Transverse colon (tissue), 4 donors: ENCODE measurements at regions of chr15 and their contacts with region 1.

Region 1: DNA sequence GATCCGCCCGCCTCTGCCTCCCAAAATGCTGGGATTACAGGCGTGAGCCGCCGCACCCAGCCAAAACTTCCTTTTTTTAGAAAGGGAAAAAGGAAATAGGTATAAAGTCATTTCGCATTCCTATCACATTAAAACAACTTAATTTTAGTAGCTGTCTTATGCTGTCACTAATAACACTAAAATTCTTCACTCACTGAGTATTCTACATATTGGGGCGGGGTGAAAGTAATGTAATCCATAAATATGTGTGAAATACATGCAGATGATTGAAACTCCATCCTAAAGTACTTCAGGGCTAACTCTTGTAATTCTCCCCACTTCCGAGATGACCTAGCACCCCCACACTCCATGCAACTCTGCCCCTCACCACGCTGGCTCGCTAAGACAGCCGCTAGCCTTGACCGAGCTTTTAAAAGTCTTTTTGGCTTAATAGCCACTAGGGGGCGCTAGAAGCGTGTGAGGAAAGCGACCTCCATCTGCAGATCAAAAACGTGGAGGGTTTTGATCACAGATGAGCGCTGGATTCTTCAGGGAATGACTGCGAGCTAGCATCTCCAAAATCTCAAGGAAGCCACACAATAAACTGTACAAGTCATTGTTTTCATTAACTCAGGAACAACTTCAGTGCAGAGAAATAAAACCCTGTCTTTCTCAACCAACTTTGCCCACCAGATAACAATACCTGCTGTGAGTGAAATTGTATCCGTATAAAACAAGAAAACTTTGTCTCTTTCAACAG is 129.3 kb upstream of the IGF1R start:
- DNase-seq: peak; percentile 32
- H3K4me3 ChIP-seq: no peak overlapping the region
- H3K27ac ChIP-seq: no peak overlapping the region
- H3K4me1 ChIP-seq: no peaks in the 10 kb centered on the region
- H3K27me3 ChIP-seq: no peaks in the 10 kb centered on the region
- CTCF ChIP-seq: peak; percentile 63 to 79 (median 74)
- EP300 ChIP-seq: no peak
- POLR2A ChIP-seq: no peak

Region 2: DNA sequence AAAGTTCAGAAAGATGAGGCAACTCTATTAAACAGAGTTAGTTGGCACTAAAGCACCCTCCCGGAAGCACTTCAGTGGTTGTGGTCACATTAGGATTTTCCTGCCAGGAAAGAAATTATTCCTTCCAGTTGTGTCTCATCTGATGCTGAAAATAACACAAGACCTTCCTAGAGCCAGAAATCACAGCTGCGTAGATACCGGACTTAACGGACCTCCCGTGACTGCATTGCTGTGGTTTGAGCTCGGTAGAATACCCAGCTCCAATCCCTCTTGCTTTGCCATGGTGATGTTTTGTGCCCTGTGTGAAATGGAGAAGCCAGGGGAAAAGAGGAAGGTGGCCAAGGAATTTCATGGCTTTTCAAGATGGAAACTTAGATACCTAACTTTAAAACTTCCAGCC is 85.6 kb before region 1 on chr15:
- in situ Hi-C with region 1: no loop called
- intact Hi-C with region 1: no loop called
- DNase-seq: no peak
- H3K4me3 ChIP-seq: no peak overlapping the region
- H3K27ac ChIP-seq: no peak overlapping the region
- H3K4me1 ChIP-seq: peaks cover 0 to 4% (median 2%) of the 10 kb centered on the region in 4 donors
- H3K27me3 ChIP-seq: no peaks in the 10 kb centered on the region
- CTCF ChIP-seq: no peak
- EP300 ChIP-seq: no peak
- POLR2A ChIP-seq: no peak

Region 3: GRCh38 chr15:98635848-98636247 is 116.9 kb after region 1 on chr15:
- in situ Hi-C with region 1: loop called in 1 of 4 experiments (anchors 10 kb)
- intact Hi-C with region 1: loop called (anchors 1 kb)
- DNase-seq: no peak
- H3K4me3 ChIP-seq: no peak overlapping the region
- H3K27ac ChIP-seq: no peak overlapping the region
- H3K4me1 ChIP-seq: no peaks in the 10 kb centered on the region
- H3K27me3 ChIP-seq: no peaks in the 10 kb centered on the region
- CTCF ChIP-seq: no peak
- EP300 ChIP-seq: no peak
- POLR2A ChIP-seq: no peak

Region 4: GRCh38 chr15:98658831-98659699 is 140.1 kb after region 1 on chr15:
- in situ Hi-C with region 1: loop called in 1 of 4 experiments (anchors 10 kb)
- intact Hi-C with region 1: no loop called
- DNase-seq: peak; percentile 21
- H3K4me3 ChIP-seq: no peak overlapping the region
- H3K27ac ChIP-seq: no peak overlapping the region
- H3K4me1 ChIP-seq: peaks cover 8 to 26% (median 16%) of the 10 kb centered on the region in 4 donors
- H3K27me3 ChIP-seq: no peaks in the 10 kb centered on the region
- CTCF ChIP-seq: peak; percentile 66 to 90 (median 85)
- EP300 ChIP-seq: no peak
- POLR2A ChIP-seq: no peak

Region 5: DNA sequence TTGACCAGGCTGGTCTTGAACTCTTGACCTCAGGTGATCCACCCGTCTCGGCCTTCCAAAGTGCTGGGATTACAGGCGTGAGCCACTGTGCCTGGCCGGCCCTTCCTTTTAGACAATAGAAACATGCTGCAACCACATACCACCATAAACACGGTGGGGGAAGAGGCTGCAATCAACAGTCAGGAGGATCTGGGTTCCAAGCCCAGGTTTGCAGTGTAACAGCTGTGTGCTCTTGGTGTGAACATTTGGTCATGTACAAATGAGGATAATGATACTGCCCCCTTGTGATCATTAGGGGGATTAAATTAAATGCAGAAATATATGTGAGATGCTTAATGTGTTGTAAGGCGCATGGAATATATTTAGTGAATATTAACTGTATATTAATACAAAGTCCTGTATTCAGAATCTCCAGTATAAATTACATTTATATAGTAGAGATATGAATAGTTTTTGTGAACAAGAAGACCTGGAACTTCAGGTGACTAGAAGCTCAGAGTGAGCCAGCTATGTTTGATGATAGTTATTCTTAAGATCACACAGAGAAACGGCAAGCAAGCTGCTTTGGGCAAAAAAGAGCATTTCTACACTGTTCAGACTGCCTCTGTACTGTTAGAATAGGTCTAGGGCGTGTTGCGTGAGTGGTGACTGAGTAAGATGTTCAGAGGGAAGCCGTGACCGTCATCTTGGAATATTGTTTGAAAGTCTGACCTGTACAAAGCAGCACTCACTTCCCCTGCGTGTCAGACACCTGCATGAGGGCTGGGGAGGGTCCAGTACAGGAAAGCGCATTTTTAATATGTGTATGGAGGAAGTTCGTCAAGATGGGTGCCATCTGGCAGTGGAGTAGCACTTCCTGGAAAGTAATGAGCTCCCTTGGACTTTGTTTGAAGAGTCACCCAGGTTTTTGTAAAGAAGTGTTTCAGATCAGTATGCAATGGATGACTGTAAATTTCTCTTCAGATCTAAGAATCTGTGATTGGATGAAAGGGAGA is 362.8 kb after region 1 on chr15:
- in situ Hi-C with region 1: loop called in 2 of 4 experiments (anchors 25 kb)
- intact Hi-C with region 1: no loop called
- DNase-seq: no peak
- H3K4me3 ChIP-seq: no peak overlapping the region
- H3K27ac ChIP-seq: no peak overlapping the region
- H3K4me1 ChIP-seq: peaks cover 0 to 18% (median 5%) of the 10 kb centered on the region in 4 donors
- H3K27me3 ChIP-seq: no peaks in the 10 kb centered on the region
- CTCF ChIP-seq: peak; percentile 57 to 62 (median 59)
- EP300 ChIP-seq: no peak
- POLR2A ChIP-seq: no peak

Region 6: DNA sequence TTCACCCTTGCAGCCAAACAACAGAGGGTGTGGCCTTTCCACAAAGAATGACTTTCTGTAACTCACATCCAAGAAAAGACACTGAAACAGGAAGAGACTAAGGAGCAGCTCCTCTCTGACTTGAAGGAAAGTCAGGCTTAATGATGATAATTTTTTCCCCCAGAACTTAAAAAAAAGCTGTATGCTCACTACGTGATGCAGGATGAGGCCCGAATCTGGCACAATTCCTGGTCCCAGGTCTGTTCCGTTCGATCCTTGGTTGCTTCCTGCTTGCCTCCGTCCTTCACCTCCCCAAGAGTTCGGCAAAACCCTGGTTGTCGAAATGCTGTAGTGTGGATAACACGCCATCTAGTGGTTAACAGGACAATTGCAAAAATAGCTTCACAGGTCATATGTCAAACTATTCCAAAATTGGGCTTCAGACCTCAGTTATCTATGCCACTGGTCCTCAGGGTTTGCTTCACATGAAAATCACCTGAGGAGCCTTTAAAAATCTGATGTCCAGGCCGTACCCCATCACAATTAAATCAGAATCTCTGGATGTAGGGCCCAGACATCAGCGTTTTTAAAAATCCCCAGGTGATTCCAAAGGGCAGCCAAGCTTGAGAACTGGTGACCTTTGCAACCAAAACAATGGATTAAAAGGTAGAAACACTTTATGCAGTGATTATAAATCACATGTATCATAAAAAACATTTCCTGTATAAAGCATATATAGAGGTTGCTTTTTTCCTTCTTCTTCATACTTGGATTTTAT is 557.7 kb after region 1 on chr15:
- in situ Hi-C with region 1: loop called (anchors 10 to 25 kb)
- intact Hi-C with region 1: loop called (anchors 2 kb)
- DNase-seq: peak; percentile 48
- H3K4me3 ChIP-seq: peak overlapping the region in 2 of 4 donors; percentile 25 to 44
- H3K27ac ChIP-seq: peak overlapping the region in 3 of 4 donors; percentile 35 to 36 (median 36)
- H3K4me1 ChIP-seq: peaks cover 0 to 9% (median 0%) of the 10 kb centered on the region in 4 donors
- H3K27me3 ChIP-seq: peaks cover 6% of the 10 kb centered on the region
- CTCF ChIP-seq: peak; percentile 81 to 86 (median 86)
- EP300 ChIP-seq: no peak
- POLR2A ChIP-seq: no peak